ENCODE measurements at regions of chr6 and their contacts with region 1.

Region 1: GRCh38 chr6:147821295-147821897 is 312.9 kb downstream of the SAMD5 start:
- DNase-seq: no peak
- ATAC-seq: no peak
- H3K4me3 ChIP-seq: no peak overlapping the region
- H3K27ac ChIP-seq: no peak overlapping the region
- H3K4me1 ChIP-seq: no peaks in the 10 kb centered on the region
- H3K27me3 ChIP-seq: no peaks in the 10 kb centered on the region
- CTCF ChIP-seq: no peak
- POLR2A ChIP-seq: no peak

Region 2: DNA sequence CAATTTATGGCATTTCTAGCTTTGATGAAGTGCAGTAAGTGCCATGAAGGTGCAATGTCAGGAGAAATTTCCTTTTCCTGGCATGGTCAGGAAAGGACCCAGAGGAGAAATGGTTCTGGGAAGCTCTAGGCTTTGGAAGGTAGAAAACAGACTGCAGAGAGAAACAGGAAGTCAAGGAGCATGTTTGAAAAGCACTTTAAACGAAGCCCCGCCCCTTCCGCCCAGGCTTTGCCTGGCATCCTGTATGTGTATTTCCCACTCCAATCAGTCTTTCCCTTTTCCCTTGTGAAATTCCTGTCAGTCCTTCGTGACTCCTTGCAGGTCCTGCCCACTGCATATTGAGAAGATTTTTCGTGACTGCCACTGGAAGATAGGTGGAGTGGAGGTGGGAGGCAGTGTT is 200.3 kb after region 1 on chr6:
- intact Hi-C with region 1: loop called in 1 of 10 experiments (anchors 10 kb)
- DNase-seq: no peak
- ATAC-seq: no peak
- H3K4me3 ChIP-seq: no peak overlapping the region
- H3K27ac ChIP-seq: no peak overlapping the region
- H3K4me1 ChIP-seq: no peaks in the 10 kb centered on the region
- H3K27me3 ChIP-seq: no peaks in the 10 kb centered on the region
- CTCF ChIP-seq: no peak
- POLR2A ChIP-seq: no peak

Region 3: DNA sequence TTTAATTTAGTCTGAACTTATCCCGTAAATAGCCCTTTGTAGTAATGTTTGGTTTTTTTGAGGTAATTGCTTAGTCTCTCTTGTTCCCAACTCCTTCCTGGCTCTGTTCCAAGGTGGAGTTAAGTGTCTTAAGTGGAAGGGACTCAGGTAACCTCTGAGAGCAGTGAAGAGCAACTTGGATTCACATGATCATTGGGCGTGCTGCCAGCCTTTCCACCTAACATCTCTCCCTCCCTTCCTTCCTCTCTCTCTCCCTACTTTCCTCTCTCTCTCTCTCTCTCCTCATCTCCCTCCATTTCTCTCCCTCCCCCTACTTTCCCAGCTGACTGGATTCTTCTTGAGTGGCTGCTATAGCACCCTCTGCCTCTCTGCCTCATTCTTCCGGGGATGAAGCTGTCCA is 288.3 kb after region 1 on chr6:
- intact Hi-C with region 1: no loop called
- DNase-seq: no peak
- ATAC-seq: no peak
- H3K4me3 ChIP-seq: no peak overlapping the region
- H3K27ac ChIP-seq: no peak overlapping the region
- H3K4me1 ChIP-seq: no peaks in the 10 kb centered on the region
- H3K27me3 ChIP-seq: no peaks in the 10 kb centered on the region
- CTCF ChIP-seq: no peak
- POLR2A ChIP-seq: no peak

Measured in heart left ventricle (tissue), 16 donors.